Right ventricle myocardium inferior (tissue), 1 donor: ENCODE measurements at regions of chr21 and their contacts with region 1.

Region 1: DNA sequence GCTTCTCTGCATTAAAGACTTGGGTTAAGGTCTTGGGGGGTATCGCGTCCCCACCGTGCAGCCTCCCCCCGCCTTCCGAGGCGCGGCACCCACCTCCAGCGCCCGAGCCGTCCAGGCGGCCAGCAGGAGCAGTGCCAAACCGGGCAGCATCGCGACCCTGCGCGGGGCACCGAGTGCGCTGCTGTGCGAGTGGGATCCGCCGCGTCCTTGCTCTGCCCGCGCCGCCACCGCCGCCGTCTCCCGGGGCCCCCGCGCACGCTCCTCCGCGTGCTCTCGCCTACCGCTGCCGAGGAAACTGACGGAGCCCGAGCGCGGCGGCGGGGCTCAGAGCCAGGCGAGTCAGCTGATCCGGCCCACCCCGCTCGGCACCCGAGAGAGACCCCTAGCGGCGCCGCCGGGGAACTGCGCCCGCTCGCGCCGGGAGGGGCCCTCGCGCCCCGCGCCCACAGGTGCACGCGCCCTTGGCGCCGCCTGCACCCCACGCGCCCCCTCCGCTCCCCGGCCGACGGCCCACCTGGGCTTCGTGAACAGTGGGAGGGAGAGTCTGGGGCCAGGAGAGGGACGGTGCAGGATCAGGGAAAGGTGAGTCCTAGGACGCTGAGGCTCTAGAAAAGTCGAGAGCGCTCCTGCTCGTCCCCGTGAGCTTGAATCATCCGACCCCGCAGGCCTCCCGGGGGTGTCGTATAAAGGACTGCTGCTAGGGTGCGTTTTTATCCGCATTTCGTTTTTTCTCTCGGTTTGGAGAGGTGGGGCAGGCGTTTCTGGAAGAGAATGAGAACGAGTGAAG is at the start of gene APP:
- DNase-seq: peak; percentile 96
- ATAC-seq: peak; percentile 89
- total RNA-seq, gene APP: 321 TPM

Region 2: GRCh38 chr21:25734904-25735645 is 435.6 kb before region 1 on chr21 and contains the starts of genes ATP5PF and GABPA:
- intact Hi-C with region 1: loop called (anchors 10 kb)
- DNase-seq: peak; percentile 98
- ATAC-seq: peak; percentile 97
- total RNA-seq, gene ATP5PF: 969 TPM
- total RNA-seq, gene GABPA: 18.3 TPM

Region 3: DNA sequence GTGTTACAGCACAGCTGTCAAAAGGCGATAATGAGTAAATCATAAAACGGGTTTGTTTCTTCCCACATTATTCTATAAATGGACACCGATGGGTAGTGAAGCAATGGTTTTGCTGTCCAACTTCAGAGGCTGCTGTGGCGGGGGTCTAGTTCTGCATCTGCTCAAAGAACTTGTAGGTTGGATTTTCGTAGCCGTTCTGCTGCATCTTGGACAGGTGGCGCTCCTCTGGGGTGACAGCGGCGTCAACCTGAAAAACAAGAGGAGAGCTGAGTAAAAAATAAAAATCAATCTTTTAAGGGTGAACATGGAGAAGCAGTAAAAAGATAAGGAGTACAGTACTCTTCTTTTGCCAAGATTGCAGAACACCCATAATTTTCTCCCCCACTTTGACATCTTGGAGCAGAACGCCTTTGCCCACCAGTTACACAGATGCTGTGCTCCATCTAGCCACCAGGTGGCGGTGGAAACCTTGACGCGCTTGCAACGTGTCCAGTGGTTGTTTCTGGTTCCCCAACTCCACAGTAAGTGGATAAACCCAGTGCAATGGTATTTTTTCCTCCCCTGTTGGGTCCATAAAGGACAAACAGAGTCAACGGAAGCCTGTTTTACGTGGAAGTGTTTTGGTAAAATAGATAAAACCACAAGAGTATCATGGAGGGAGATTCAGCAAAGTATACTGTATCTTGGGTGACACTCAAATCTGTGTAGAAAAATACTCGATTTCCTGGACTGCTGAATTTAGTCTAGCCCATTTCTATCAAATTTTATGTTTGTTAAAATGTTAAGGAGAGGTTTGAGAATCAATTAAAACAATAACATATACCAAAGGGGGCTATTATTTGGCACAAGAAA is 288.9 kb before region 1 on chr21:
- intact Hi-C with region 1: loop called (anchors 1 kb)
- DNase-seq: peak; percentile 82
- ATAC-seq: peak; percentile 76

Region 4: DNA sequence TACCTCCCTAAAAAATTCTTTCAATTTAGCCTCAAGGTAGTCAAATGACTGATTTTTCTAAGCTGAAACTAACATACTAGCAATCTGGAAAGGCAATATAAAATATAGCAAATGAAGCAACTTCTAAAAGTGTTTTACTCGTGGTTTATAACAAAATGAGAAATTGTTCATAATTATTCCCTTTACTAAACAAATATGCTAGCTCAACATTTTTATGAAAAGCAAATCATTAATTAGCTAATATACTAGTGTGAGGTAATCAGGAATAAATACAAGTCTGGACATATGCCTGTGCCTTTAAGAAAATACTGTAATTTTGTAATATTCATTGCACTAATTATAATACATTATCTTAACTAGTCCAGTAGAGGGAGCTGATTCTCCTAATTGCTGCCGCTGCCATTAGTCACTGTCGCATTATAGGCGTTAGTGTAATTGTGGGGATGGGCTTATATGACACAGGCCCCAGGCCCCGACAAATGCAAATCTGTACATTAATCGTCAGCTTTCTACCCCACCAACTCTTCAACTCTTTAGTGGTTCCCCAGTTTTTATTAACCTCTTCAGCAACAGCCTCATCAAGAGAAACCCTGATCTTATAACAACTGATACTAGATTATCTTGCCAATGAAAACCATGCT is 275.0 kb before region 1 on chr21:
- intact Hi-C with region 1: loop called (anchors 5 kb)
- DNase-seq: no peak
- ATAC-seq: peak; percentile 62

Region 5: DNA sequence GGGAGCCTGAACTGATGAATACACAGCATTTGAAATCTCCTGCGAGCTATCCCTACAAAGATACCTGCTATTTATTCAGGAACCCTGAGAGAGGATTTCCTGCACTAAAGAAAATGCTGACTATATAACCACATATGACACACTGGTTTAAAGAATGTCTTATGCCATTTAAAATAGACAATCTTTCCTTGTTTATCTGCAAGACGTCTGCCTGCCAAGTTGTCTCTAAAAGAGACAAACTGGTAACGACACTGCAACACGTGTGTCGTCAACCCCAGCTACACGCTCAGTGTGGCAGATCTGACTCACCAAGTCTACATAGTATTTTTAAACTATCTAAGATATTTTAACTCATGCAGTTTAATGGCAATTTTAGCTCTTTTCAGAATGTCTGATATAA is 42.7 kb before region 1 on chr21:
- intact Hi-C with region 1: loop called (anchors 5 kb)
- DNase-seq: no peak
- ATAC-seq: peak; percentile 40

Region 6: GRCh38 chr21:26199456-26199855 is 28.8 kb after region 1 on chr21:
- intact Hi-C with region 1: no loop called
- DNase-seq: no peak
- ATAC-seq: no peak

Region 7: DNA sequence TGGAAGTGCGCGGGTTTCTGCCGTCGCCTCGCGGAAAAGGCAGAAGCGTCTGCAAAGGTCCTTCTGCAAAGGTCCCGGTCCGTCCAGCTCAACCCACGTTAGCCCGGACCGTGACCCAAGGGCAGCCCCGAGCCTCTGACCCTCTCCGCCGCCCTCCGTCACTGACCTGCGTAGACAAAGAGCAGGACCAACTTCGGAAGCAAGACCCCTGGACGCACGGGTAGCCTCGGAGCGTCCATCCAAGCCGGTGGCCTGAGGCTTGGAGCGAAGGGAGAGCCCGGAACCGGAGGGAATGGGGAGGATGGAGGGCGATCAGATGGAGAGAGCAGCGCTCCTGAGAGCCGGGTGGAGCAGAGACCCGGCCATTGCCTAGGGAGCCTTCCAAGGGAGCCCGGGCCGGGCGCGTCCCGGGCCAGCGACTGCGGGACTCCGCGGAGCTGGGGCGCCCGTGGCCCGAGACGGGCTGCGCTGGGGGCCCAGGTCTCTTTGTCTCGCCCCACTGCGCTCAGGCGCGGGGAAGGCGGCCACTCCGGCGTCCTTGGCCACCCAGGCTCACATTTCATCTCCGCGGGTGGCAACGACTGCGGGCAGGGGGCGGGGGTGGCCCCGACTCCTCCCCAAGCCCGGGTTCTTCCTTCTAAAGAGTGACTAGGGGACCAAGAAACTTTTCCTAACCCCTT is 402.2 kb after region 1 on chr21 and contains the start of gene CYYR1:
- intact Hi-C with region 1: loop called (anchors 10 kb)
- DNase-seq: peak; percentile 72
- ATAC-seq: peak; percentile 23
- total RNA-seq, gene CYYR1: 27.3 TPM

Region 8: GRCh38 chr21:26715878-26716506 is 545.3 kb after region 1 on chr21:
- intact Hi-C with region 1: loop called (anchors 10 kb)
- DNase-seq: no peak
- ATAC-seq: peak; percentile 50